A549 (cell line): ENCODE measurements at regions of chr17 and their contacts with region 1.

Region 1: DNA sequence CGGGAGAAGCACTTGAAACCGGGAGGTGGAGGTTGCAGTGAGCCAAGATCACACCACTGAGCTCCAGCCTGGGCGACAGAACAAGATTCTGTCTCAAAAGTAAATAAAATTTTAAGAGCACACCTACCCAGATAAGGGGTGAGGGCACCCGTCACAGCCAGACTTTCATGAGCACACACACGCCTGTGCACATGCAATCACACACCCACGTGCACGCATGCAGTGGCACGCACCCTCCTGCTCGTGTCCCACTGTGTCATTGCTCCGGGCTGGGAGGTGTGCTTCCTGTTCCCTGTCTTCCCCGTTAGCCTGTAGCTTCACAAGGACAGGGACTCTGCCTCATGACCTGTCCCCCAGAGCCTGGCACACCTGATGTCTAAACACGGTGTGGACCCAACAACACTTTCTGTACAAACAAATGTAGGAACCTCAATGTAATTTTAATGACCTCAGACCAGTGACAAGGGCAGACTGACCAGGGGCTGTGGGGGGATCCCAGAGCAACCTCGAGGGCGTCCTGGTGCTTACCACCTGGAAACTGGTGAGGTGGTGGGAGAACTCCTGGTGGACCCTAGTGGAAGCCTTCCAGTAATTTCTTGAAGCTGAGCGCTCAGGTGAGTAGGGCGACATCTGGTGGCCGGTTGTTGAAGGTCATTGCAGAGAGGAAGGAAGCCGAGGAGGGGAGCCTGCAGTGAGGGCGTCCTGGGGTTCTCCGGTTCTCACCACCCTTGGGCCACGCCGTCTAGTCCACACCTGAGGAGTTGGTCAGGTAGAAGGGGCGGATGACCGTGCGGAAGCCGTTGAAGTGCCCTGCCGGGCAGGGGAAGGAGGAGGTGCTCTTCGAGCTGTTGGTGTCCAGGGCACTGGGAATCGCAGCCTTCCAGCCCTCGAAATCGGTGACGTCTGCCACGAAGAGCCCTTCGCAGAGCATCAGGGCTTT is 8.6 kb downstream of the LGALS3BP start:
- DNase-seq: peak; percentile 83 to 91
- ATAC-seq: peak; percentile 45 to 81
- H3K4me3 ChIP-seq: no peak overlapping the region
- H3K27ac ChIP-seq: peak overlapping the region; percentile 31 to 76
- H3K4me1 ChIP-seq: peaks cover 20% of the 10 kb centered on the region; the same call in 2 of the 3 replicates
- CTCF ChIP-seq: peak; percentile 98
- EP300 ChIP-seq: no peak
- POLR2A ChIP-seq: no peak
- RAD21 ChIP-seq: peak; percentile 96

Region 2: GRCh38 chr17:78852709-78853121 is 118.4 kb before region 1 on chr17:
- CTCF ChIA-PET with region 1: interaction called, 29 read pairs
- POLR2A ChIA-PET with region 1: no interaction called
- DNase-seq: peak in 1 of 2 experiments; percentile 41
- ATAC-seq: 0 out of 6 replicates have a peak, but pooled peaks of 1 of the 2 experiments have one; percentile 12
- H3K4me3 ChIP-seq: no peak overlapping the region
- H3K27ac ChIP-seq: no peak overlapping the region
- H3K4me1 ChIP-seq: no peaks in the 10 kb centered on the region
- CTCF ChIP-seq: no peak
- EP300 ChIP-seq: no peak
- POLR2A ChIP-seq: no peak
- RAD21 ChIP-seq: no peak; a peak in 1 of 5 replicates

Region 3: DNA sequence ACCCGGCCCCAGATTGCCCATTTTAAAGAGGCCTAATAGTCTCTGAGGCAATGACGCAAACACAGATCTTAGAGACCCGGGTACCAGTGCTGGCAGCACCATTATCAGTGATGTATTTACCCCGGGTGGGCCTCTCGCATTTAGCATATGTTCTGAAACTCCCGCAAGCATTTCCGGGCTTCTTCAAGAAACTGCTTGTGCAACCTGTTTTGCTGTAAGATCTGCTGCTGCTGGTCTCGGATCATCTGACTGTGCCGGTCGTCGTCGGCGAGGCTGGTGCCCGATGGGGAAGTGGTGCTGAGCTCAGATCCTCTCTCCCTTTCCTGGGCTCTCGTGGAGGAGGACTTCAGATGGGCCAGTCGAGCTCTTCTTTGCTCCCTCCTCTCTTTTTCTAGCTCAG is 80.6 kb before region 1 on chr17:
- CTCF ChIA-PET with region 1: interaction called, 41 read pairs
- POLR2A ChIA-PET with region 1: no interaction called
- DNase-seq: no peak
- ATAC-seq: no peak
- H3K4me3 ChIP-seq: no peak overlapping the region
- H3K27ac ChIP-seq: no peak overlapping the region
- H3K4me1 ChIP-seq: peaks cover 17% of the 10 kb centered on the region
- CTCF ChIP-seq: no peak
- EP300 ChIP-seq: no peak
- POLR2A ChIP-seq: no peak
- RAD21 ChIP-seq: no peak

Region 4: GRCh38 chr17:78910497-78911284 is 60.4 kb before region 1 on chr17:
- CTCF ChIA-PET with region 1: interaction called, 40 read pairs
- POLR2A ChIA-PET with region 1: no interaction called
- DNase-seq: no peak
- ATAC-seq: no peak
- H3K4me3 ChIP-seq: no peak overlapping the region
- H3K27ac ChIP-seq: no peak overlapping the region
- H3K4me1 ChIP-seq: peaks cover 19% of the 10 kb centered on the region
- CTCF ChIP-seq: no peak
- EP300 ChIP-seq: no peak
- POLR2A ChIP-seq: no peak
- RAD21 ChIP-seq: no peak

Region 5: GRCh38 chr17:78933959-78934568 is 37.0 kb before region 1 on chr17:
- CTCF ChIA-PET with region 1: interaction called, 169 read pairs
- POLR2A ChIA-PET with region 1: interaction called, 3 read pairs
- DNase-seq: peak; percentile 92 to 94
- ATAC-seq: peak; percentile 71 to 78
- H3K4me3 ChIP-seq: peak overlapping the region; percentile 26
- H3K27ac ChIP-seq: peak overlapping the region; percentile 91 to 97
- H3K4me1 ChIP-seq: peaks cover 56% of the 10 kb centered on the region
- CTCF ChIP-seq: no peak
- EP300 ChIP-seq: peak in 1 of 2 experiments; percentile 45; a peak in 1 of 5 replicates
- POLR2A ChIP-seq: peak; percentile 46
- RAD21 ChIP-seq: no peak

Region 6: DNA sequence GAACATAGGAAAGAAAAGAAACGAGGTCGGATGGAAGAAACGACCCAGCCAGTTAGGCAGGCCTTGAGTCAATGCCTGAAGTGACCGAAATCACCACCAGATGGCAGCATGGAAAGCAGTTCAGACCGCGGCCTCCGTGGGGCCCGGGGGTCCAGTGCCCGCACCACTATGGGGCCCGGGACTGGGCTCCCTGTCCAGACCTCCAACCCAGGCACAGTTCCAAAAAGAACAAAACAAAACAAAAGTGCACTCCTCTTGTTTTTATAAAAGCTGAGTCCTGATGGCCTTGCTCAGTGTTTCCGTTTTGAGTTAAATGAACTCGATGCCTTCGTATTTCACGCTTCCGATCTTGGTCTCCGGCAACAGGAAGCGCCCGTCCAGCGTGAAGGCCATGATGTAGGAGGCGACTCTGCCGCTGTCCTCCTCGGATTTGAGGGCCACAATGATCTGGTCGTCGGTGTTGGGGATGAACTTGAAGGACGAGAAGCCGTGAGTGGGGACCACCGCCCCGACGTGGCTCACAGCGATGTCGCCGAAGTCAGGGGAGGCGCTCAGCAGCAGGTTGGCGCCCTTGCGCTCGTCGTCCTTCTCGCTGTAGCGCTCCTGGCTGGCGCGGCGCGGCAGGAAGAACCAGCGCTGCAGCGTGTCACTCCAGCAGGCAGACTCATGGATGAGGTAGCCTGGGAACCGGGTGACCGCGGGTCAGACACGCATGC is 22.3 kb after region 1 on chr17:
- CTCF ChIA-PET with region 1: interaction called, 99 read pairs
- POLR2A ChIA-PET with region 1: no interaction called
- DNase-seq: peak; percentile 69 to 78
- ATAC-seq: peak; percentile 64 to 87; a peak in 4 of 6 replicates
- H3K4me3 ChIP-seq: no peak overlapping the region
- H3K27ac ChIP-seq: no peak overlapping the region
- H3K4me1 ChIP-seq: no peaks in the 10 kb centered on the region; the same call in 2 of the 3 replicates
- CTCF ChIP-seq: peak; percentile 89
- EP300 ChIP-seq: no peak
- POLR2A ChIP-seq: no peak
- RAD21 ChIP-seq: peak; percentile 49 to 54